CD8-positive, alpha-beta T cell (primary cell): ENCODE measurements at regions of chr9 and their contacts with region 1.

Region 1: GRCh38 chr9:131334629-131335367 is 45.3 kb downstream of the PLPP7 start:
- DNase-seq: no peak
- ATAC-seq: no peak
- H3K4me3 ChIP-seq: no peak overlapping the region
- H3K4me3 Mint-ChIP-seq: no peak overlapping the region
- H3K27ac ChIP-seq: no peak overlapping the region
- H3K27ac Mint-ChIP-seq: no peak overlapping the region
- H3K4me1 ChIP-seq: peaks cover 4% of the 10 kb centered on the region
- H3K4me1 Mint-ChIP-seq: peaks cover 5% of the 10 kb centered on the region
- H3K27me3 ChIP-seq: no peaks in the 10 kb centered on the region
- H3K27me3 Mint-ChIP-seq: no peaks in the 10 kb centered on the region
- CTCF ChIP-seq: no peak

Region 2: GRCh38 chr9:131056781-131057506 is 277.9 kb before region 1 on chr9:
- CTCF ChIA-PET with region 1: interaction called, 13 read pairs
- POLR2A ChIA-PET with region 1: interaction called, 3 read pairs
- intact Hi-C with region 1: loop called in 1 of 2 experiments (anchors 1 kb)
- DNase-seq: no peak
- ATAC-seq: no peak
- H3K4me3 ChIP-seq: no peak overlapping the region
- H3K4me3 Mint-ChIP-seq: no peak overlapping the region
- H3K27ac ChIP-seq: no peak overlapping the region
- H3K27ac Mint-ChIP-seq: no peak overlapping the region
- H3K4me1 ChIP-seq: no peaks in the 10 kb centered on the region
- H3K4me1 Mint-ChIP-seq: no peaks in the 10 kb centered on the region
- H3K27me3 ChIP-seq: peaks cover 0 to 3% of the 10 kb centered on the region in 2 experiments
- H3K27me3 Mint-ChIP-seq: no peaks in the 10 kb centered on the region
- CTCF ChIP-seq: no peak

Region 3: DNA sequence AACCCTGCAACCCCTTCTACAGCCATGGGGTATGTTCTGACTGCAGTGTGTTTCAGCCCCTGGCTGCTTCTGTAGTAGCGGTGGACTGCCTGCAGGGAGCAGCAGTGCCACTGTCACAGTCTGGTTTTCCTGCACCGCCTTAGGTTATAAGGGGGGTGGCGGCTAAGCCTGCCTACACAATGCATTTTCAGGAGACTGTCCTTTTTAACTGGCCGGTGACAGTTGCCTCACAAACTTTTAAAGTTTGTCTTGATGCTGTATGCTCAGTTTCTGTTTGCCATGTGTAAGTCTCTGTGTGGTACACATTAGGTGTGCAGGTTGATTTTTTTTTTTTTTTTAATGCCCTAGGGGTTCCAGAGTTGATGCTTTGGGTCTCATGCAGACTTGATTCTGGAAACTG is 156.4 kb before region 1 on chr9:
- CTCF ChIA-PET with region 1: interaction called, 254 read pairs
- POLR2A ChIA-PET with region 1: interaction called, 5 read pairs
- intact Hi-C with region 1: loop called in 1 of 2 experiments (anchors 1 kb)
- DNase-seq: peak; percentile 65 to 86 (median 77)
- ATAC-seq: peak; percentile 100
- H3K4me3 ChIP-seq: no peak overlapping the region
- H3K4me3 Mint-ChIP-seq: no peak overlapping the region
- H3K27ac ChIP-seq: no peak overlapping the region
- H3K27ac Mint-ChIP-seq: no peak overlapping the region
- H3K4me1 ChIP-seq: no peaks in the 10 kb centered on the region
- H3K4me1 Mint-ChIP-seq: peaks cover 12% of the 10 kb centered on the region
- H3K27me3 ChIP-seq: no peaks in the 10 kb centered on the region
- H3K27me3 Mint-ChIP-seq: no peaks in the 10 kb centered on the region
- CTCF ChIP-seq: peak; percentile 99

Region 4: GRCh38 chr9:131203431-131204218 is 131.2 kb before region 1 on chr9:
- CTCF ChIA-PET with region 1: interaction called, 18 read pairs
- POLR2A ChIA-PET with region 1: no interaction called
- intact Hi-C with region 1: no loop called
- DNase-seq: peak in 1 of 9 experiments; percentile 12
- ATAC-seq: no peak
- H3K4me3 ChIP-seq: no peak overlapping the region
- H3K4me3 Mint-ChIP-seq: no peak overlapping the region
- H3K27ac ChIP-seq: no peak overlapping the region
- H3K27ac Mint-ChIP-seq: no peak overlapping the region
- H3K4me1 ChIP-seq: no peaks in the 10 kb centered on the region
- H3K4me1 Mint-ChIP-seq: no peaks in the 10 kb centered on the region
- H3K27me3 ChIP-seq: no peaks in the 10 kb centered on the region
- H3K27me3 Mint-ChIP-seq: no peaks in the 10 kb centered on the region
- CTCF ChIP-seq: no peak

Region 5: DNA sequence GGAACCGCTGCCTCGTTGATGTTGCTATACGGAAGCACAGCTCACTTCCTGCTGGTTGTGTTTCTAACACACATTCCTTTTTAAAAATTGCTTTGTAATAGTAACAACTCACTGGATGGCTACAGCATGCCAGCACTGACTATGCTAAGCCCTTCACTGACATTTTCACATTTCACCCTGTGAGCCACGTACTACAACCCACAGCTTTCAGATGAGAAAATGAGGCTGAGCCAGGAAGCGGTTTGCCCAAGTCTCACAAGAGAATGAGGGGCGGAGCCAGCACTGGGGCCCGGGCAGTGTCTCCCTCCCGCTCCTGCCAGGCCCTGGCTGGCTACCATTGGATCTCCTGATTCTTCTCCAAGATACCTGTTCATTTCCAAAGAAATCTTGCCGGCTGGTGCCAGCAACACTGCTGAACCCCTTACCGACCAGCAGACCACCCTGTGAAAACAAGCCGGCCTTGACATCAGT is 96.8 kb before region 1 on chr9:
- CTCF ChIA-PET with region 1: interaction called, 11 read pairs
- POLR2A ChIA-PET with region 1: interaction called, 3 read pairs
- intact Hi-C with region 1: no loop called
- DNase-seq: peak; percentile 71 to 94 (median 88)
- ATAC-seq: peak; percentile 92
- H3K4me3 ChIP-seq: peak overlapping the region; percentile 15 to 50
- H3K4me3 Mint-ChIP-seq: peak overlapping the region; percentile 83
- H3K27ac ChIP-seq: peak overlapping the region; percentile 54 to 73
- H3K27ac Mint-ChIP-seq: peak overlapping the region; percentile 98
- H3K4me1 ChIP-seq: peaks cover 41% of the 10 kb centered on the region
- H3K4me1 Mint-ChIP-seq: peaks cover 42% of the 10 kb centered on the region
- H3K27me3 ChIP-seq: no peaks in the 10 kb centered on the region
- H3K27me3 Mint-ChIP-seq: no peaks in the 10 kb centered on the region
- CTCF ChIP-seq: no peak

Region 6: DNA sequence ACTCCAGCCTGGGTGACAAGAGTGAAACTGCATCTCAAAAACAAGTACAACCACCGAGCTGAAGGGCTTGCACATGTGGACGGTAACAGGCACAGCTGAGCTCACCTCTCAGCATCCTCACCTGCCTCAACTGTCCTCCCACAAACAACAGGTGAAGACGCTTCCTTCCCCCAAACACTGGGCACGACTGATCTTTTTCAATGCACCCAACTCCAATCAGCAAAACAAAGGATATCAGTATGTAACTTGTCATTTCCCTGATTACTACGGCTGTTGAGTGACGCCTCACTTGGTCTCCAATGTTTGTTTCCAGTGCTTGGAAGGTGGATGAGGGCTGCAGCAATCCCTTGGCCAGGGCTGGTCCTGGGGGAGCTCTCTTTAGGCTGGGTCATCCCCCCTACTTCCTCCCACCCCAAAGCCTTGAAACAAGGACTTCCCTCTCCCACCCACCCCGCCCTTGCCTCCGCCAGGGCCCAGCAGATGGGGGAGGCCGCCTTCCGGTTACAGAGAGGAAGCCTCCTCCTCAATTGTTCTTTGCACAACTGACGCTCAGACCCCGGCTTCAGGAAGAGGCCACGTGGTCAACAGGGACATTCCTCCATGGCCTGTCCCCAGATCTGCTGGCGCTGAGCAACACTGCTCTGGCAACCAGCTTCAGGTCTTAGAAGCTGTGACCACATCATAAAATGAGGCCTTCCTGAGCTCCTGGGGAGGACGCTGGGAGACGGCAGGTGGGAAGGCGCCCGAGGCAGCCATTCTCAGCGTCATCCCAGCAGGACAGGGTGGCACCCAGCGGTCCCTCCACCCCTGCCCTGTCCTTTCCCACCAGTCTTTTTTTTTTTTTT is 64.4 kb before region 1 on chr9:
- CTCF ChIA-PET with region 1: interaction called, 15 read pairs
- POLR2A ChIA-PET with region 1: interaction called, 4 read pairs
- intact Hi-C with region 1: no loop called
- DNase-seq: peak in 6 of 9 experiments; percentile 38 to 82 (median 62)
- ATAC-seq: peak; percentile 7
- H3K4me3 ChIP-seq: peak overlapping the region; percentile 90 to 95
- H3K4me3 Mint-ChIP-seq: peak overlapping the region; percentile 98
- H3K27ac ChIP-seq: peak overlapping the region; percentile 84 to 93
- H3K27ac Mint-ChIP-seq: peak overlapping the region; percentile 94
- H3K4me1 ChIP-seq: peaks cover 60% of the 10 kb centered on the region
- H3K4me1 Mint-ChIP-seq: peaks cover 70% of the 10 kb centered on the region
- H3K27me3 ChIP-seq: no peaks in the 10 kb centered on the region
- H3K27me3 Mint-ChIP-seq: no peaks in the 10 kb centered on the region
- CTCF ChIP-seq: no peak

Region 7: DNA sequence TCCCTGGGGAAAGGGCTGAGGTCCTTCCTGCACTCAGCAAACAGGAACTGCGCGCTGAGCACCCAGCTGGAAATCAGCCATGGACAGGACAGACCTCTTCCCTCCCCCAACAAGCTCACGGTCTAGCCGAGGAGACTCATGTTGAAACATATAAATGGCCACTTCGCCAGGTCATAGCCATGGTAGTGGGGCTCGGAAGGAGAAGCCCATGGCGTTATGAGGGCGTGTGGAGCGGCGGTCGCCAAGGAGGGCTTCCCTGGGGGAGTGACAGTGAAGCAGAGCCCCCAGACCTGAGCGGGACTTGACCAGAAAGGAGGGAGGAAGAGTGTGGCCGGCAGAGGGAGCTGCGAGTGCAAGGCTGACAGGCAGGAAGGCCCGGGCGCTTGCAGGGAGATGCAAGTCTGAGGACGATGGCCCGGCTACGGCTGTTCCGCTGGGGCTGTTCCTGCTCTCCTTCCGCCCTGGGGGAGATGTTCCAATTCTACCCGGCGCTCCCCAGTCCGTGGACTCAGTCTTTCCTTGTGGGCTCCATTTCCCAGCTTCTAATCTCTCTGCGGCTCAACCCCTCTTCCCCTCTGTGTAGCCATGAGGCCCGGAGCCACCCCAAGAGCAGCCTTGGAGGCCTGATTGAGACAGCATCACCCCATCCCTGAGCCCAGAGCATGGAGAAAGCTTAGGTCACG is 15.2 kb after region 1 on chr9:
- CTCF ChIA-PET with region 1: interaction called, 17 read pairs
- POLR2A ChIA-PET with region 1: no interaction called
- intact Hi-C with region 1: no loop called
- DNase-seq: peak; percentile 75 to 93 (median 88)
- ATAC-seq: peak; percentile 99
- H3K4me3 ChIP-seq: no peak overlapping the region
- H3K4me3 Mint-ChIP-seq: peak overlapping the region; percentile 43
- H3K27ac ChIP-seq: no peak overlapping the region
- H3K27ac Mint-ChIP-seq: peak overlapping the region; percentile 49
- H3K4me1 ChIP-seq: peaks cover 9% of the 10 kb centered on the region
- H3K4me1 Mint-ChIP-seq: peaks cover 6% of the 10 kb centered on the region
- H3K27me3 ChIP-seq: no peaks in the 10 kb centered on the region
- H3K27me3 Mint-ChIP-seq: peaks cover 3% of the 10 kb centered on the region
- CTCF ChIP-seq: peak; percentile 81

Region 8: GRCh38 chr9:132169672-132170392 is 835.0 kb after region 1 on chr9:
- CTCF ChIA-PET with region 1: no interaction called
- POLR2A ChIA-PET with region 1: no interaction called
- intact Hi-C with region 1: no loop called
- DNase-seq: peak; percentile 13 to 74 (median 59)
- ATAC-seq: peak; percentile 64
- H3K4me3 ChIP-seq: no peak overlapping the region
- H3K4me3 Mint-ChIP-seq: no peak overlapping the region
- H3K27ac ChIP-seq: no peak overlapping the region
- H3K27ac Mint-ChIP-seq: no peak overlapping the region
- H3K4me1 ChIP-seq: no peaks in the 10 kb centered on the region
- H3K4me1 Mint-ChIP-seq: no peaks in the 10 kb centered on the region
- H3K27me3 ChIP-seq: no peaks in the 10 kb centered on the region
- H3K27me3 Mint-ChIP-seq: peaks cover 34% of the 10 kb centered on the region
- CTCF ChIP-seq: peak; percentile 77